Activated B cell treated with CpG ODN at 0.5 μM for 24 hours (primary cell): ENCODE measurements at regions of chr10 and their contacts with region 1.

Region 1: DNA sequence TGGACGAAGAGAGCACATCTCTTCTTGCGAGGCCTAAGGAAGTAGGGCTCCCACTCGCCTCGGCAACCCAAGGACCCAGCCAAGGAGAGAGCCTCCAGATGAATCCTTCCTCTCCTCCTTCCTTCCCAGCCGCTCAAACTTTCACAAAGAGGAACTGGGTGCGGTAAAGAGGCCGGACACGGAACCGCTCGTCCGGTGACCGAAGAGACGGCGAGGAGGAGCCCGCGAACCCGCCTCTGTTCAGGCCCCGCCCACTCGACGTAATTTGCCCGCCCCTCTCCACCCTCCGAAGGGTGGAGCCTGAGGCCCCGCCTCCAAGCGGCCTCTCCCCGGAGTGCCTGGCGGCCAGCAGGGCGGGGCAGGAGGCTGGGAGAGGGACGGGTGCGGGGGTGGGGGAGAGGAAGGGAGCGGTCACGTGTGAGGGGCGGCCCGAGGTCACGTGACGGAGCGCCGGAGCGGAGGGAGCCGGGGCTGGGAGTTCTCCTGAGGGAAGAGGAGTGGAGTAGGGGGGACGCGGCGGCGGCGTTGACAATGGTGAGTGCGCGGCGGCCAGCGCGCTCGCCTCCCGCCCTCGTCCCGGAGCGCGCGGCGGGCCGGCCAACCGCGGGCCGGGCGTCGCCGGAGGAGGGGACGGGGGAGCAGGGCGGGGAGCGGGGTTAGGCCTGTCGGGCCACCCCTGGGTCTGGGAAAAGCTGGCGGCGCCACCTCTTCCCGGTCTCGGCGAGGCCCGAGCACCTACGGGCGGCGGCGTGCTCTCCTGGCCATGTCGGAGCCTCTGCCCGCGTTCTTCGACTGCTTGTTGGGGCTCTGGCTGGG is at the start of gene VPS26A:
- DNase-seq: peak; percentile 100
- ATAC-seq: peak; percentile 94
- H3K4me3 Mint-ChIP-seq: peak within 1 kb of the TSS; percentile 93
- H3K27ac Mint-ChIP-seq: peak within 1 kb of the TSS; percentile 98
- H3K4me1 Mint-ChIP-seq: peaks cover 25% of the 10 kb centered on the region
- H3K27me3 Mint-ChIP-seq: no peaks in the 10 kb centered on the region
- CTCF ChIP-seq: no peak
- total RNA-seq, gene VPS26A: 25.9 and 29.5 TPM in 2 replicates

Region 2: GRCh38 chr10:68526626-68527307 is 597.2 kb before region 1 on chr10:
- CTCF ChIA-PET with region 1: no interaction called
- POLR2A ChIA-PET with region 1: no interaction called
- intact Hi-C with region 1: loop called (anchors 1 kb)
- DNase-seq: no peak
- ATAC-seq: no peak
- H3K4me3 Mint-ChIP-seq: peak overlapping the region; percentile 86
- H3K27ac Mint-ChIP-seq: peak overlapping the region; percentile 73
- H3K4me1 Mint-ChIP-seq: peaks cover 14% of the 10 kb centered on the region
- H3K27me3 Mint-ChIP-seq: no peaks in the 10 kb centered on the region
- CTCF ChIP-seq: no peak

Region 3: GRCh38 chr10:68955832-68956532 is 168.0 kb before region 1 on chr10 and contains the start of gene DDX21:
- CTCF ChIA-PET with region 1: no interaction called
- POLR2A ChIA-PET with region 1: interaction called, 15 read pairs
- intact Hi-C with region 1: loop called (anchors 1 kb)
- DNase-seq: peak; percentile 79
- ATAC-seq: peak; percentile 82
- H3K4me3 Mint-ChIP-seq: peak within 1 kb of the TSS; percentile 100
- H3K27ac Mint-ChIP-seq: peak within 1 kb of the TSS; percentile 100
- H3K4me1 Mint-ChIP-seq: peaks cover 41% of the 10 kb centered on the region
- H3K27me3 Mint-ChIP-seq: no peaks in the 10 kb centered on the region
- CTCF ChIP-seq: no peak
- total RNA-seq, gene DDX21: 111 and 112 TPM in 2 replicates

Region 4: GRCh38 chr10:69004821-69005220 is 119.1 kb before region 1 on chr10:
- CTCF ChIA-PET with region 1: interaction called, 6 read pairs
- POLR2A ChIA-PET with region 1: interaction called, 3 read pairs
- intact Hi-C with region 1: loop called (anchors 1 kb)
- DNase-seq: no peak
- ATAC-seq: peak; percentile 71
- H3K4me3 Mint-ChIP-seq: no peak overlapping the region
- H3K27ac Mint-ChIP-seq: no peak overlapping the region
- H3K4me1 Mint-ChIP-seq: no peaks in the 10 kb centered on the region
- H3K27me3 Mint-ChIP-seq: no peaks in the 10 kb centered on the region
- CTCF ChIP-seq: no peak

Region 5: GRCh38 chr10:69092959-69093850 is 30.8 kb before region 1 on chr10:
- CTCF ChIA-PET with region 1: interaction called, 4 read pairs
- POLR2A ChIA-PET with region 1: interaction called, 3 read pairs
- intact Hi-C with region 1: loop called (anchors 1 kb)
- DNase-seq: peak; percentile 27
- ATAC-seq: peak; percentile 59
- H3K4me3 Mint-ChIP-seq: no peak overlapping the region
- H3K27ac Mint-ChIP-seq: peak overlapping the region; percentile 8
- H3K4me1 Mint-ChIP-seq: peaks cover 45% of the 10 kb centered on the region
- H3K27me3 Mint-ChIP-seq: no peaks in the 10 kb centered on the region
- CTCF ChIP-seq: peak; percentile 34

Region 6: GRCh38 chr10:69107699-69108098 is 16.3 kb before region 1 on chr10:
- CTCF ChIA-PET with region 1: no interaction called
- POLR2A ChIA-PET with region 1: no interaction called
- intact Hi-C with region 1: no loop called
- DNase-seq: no peak
- ATAC-seq: no peak
- H3K4me3 Mint-ChIP-seq: no peak overlapping the region
- H3K27ac Mint-ChIP-seq: no peak overlapping the region
- H3K4me1 Mint-ChIP-seq: no peaks in the 10 kb centered on the region
- H3K27me3 Mint-ChIP-seq: no peaks in the 10 kb centered on the region
- CTCF ChIP-seq: no peak

Region 7: DNA sequence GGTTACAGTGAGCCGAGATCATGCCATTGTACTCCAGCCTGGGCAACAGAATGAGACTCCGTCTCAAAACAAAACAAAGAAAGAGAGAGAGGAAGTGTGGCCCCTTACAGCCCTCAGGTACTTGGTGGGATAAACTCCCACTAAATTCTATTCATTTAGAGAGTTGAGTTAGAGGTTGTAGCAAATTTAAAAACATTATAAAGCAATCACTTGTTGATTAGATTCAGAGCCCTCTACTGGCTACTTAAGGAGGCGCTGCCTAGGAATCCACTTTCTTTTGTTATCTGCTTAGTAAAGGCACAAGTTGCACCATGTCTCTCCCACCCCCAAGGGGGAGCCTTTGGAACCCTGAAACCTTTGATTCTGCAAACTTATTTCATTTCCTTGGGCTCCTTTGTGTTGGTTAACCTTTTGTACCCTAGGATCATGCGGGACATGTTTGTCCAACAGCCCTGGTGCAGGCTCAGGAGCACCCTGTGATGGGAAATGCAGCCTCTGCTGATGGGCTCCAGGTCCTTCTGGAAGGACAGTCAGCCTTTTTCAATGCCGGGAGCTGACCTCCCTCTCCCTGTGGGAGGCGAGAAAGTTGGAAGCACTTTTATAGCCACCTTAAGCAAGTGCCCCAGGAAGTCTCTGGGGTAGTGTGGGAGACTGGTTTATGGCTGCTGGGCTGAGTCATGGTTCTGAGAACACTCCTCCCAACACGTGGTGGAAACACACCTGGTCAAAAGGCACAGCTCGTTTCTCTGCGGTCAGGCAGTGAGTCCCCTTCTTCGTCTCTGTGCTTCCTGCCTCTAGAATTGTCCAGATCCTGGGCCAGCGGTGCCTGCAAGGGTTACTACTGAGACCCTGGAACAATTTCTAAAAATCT is 98.4 kb after region 1 on chr10:
- CTCF ChIA-PET with region 1: no interaction called
- POLR2A ChIA-PET with region 1: interaction called, 3 read pairs
- intact Hi-C with region 1: loop called (anchors 1 kb)
- DNase-seq: peak; percentile 29
- ATAC-seq: peak; percentile 85
- H3K4me3 Mint-ChIP-seq: peak overlapping the region; percentile 53
- H3K27ac Mint-ChIP-seq: peak overlapping the region; percentile 68
- H3K4me1 Mint-ChIP-seq: peaks cover 29% of the 10 kb centered on the region
- H3K27me3 Mint-ChIP-seq: no peaks in the 10 kb centered on the region
- CTCF ChIP-seq: no peak